Psoas muscle (tissue), 8 donors: ENCODE measurements at regions of chr9 and their contacts with region 1.

Region 1: GRCh38 chr9:119004620-119004994 is 364.6 kb downstream of the BRINP1 start:
- DNase-seq: peak; percentile 27 to 66
- ATAC-seq: peak; percentile 83 to 96 (median 90)
- H3K4me3 ChIP-seq: no peak overlapping the region
- H3K27ac ChIP-seq: peak overlapping the region; percentile 74
- H3K4me1 ChIP-seq: peaks cover 27% of the 10 kb centered on the region
- H3K27me3 ChIP-seq: no peaks in the 10 kb centered on the region
- CTCF ChIP-seq: no peak

Region 2: GRCh38 chr9:118761016-118761790 is 243.4 kb before region 1 on chr9:
- intact Hi-C with region 1: no loop called
- DNase-seq: no peak
- ATAC-seq: no peak
- H3K4me3 ChIP-seq: no peak overlapping the region
- H3K27ac ChIP-seq: no peak overlapping the region
- H3K4me1 ChIP-seq: no peaks in the 10 kb centered on the region
- H3K27me3 ChIP-seq: no peaks in the 10 kb centered on the region
- CTCF ChIP-seq: no peak

Region 3: DNA sequence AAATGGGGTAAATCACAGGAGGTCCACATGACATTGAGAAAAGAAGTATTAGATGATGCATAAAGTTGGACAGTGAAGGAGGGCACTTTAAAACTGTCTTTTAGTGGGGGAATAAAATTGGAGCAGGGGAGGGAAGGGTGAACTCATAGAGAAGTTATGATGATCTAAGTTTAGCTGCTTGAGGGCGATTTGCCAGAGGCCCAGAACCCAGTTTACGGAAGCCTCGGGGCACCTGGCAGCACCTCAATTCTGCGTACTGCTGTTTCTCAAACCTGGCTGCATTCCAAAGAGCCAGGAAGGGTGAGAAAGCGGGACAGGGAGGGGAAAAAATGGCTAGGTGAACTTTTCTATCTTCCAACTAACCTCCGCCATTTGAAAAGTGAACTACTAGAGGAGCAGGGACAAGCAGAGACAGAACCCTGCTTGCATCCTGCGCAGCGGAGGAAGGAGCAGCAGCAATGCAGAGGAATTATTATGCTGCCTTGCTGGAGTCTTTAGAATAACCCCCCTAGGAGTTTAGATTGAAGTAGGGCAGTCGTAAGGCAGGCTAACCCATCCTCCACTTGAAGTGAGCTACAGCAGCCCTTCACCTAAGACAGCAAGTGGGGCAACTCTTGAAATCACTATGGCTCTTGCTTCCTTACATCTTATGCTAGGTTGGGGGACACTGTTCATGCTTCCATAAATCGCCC is 47.9 kb after region 1 on chr9:
- intact Hi-C with region 1: loop called in 1 of 2 experiments (anchors 5 kb)
- DNase-seq: peak; percentile 19 to 77
- ATAC-seq: peak in 3 of 4 donors; percentile 22 to 85 (median 77)
- H3K4me3 ChIP-seq: peak overlapping the region; percentile 31
- H3K27ac ChIP-seq: peak overlapping the region; percentile 42
- H3K4me1 ChIP-seq: peaks cover 18% of the 10 kb centered on the region
- H3K27me3 ChIP-seq: no peaks in the 10 kb centered on the region
- CTCF ChIP-seq: no peak